ENCODE measurements at regions of chr10 and their contacts with region 1.

Region 1: GRCh38 chr10:42638055-42638820 is at the start of gene ZNF33B:
- DNase-seq: peak; percentile 95
- H3K4me3 ChIP-seq: peak within 1 kb of the TSS; percentile 72
- H3K27ac ChIP-seq: peak within 1 kb of the TSS; percentile 93
- H3K4me1 ChIP-seq: peaks cover 5% of the 10 kb centered on the region
- H3K27me3 ChIP-seq: no peaks in the 10 kb centered on the region
- CTCF ChIP-seq: no peak
- total RNA-seq, gene ZNF33B: 15.7 and 18.3 TPM in 2 replicates

Region 2: GRCh38 chr10:42532996-42533395 is 105.2 kb before region 1 on chr10:
- CTCF ChIA-PET with region 1: no interaction called
- POLR2A ChIA-PET with region 1: no interaction called
- intact Hi-C with region 1: no loop called
- DNase-seq: no peak
- H3K4me3 ChIP-seq: no peak overlapping the region
- H3K27ac ChIP-seq: no peak overlapping the region
- H3K4me1 ChIP-seq: no peaks in the 10 kb centered on the region
- H3K27me3 ChIP-seq: no peaks in the 10 kb centered on the region
- CTCF ChIP-seq: no peak

Region 3: DNA sequence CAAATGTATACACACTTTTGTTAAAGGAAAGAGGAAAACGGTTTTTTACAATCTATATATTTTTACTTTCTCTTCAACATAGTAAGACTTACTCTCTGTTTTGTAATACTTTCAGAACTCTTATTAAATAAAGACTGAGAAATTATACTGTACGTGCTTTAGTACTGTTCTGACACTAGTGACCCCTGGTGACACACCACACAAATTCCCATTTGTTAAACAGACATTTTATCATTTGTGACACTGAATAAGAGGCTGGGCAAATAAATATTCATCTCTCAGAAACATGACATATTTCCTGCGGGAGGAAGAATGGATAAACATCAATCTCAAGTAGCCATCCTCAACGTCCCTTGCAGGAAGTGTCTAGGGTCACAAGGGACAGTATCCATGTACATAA is 69.0 kb after region 1 on chr10:
- CTCF ChIA-PET with region 1: no interaction called
- POLR2A ChIA-PET with region 1: no interaction called
- intact Hi-C with region 1: loop called (anchors 2 kb)
- DNase-seq: no peak
- H3K4me3 ChIP-seq: no peak overlapping the region
- H3K27ac ChIP-seq: no peak overlapping the region
- H3K4me1 ChIP-seq: no peaks in the 10 kb centered on the region
- H3K27me3 ChIP-seq: no peaks in the 10 kb centered on the region
- CTCF ChIP-seq: no peak

Measured in A673 (cell line).